Activated T-helper 1 cell treated with anti-CD3 and anti-CD28 coated beads, Interleukin-12 subunit alpha, Interleukin-12 subunit beta, Interleukin-2, Interleukin-4 antibody, amounts not matched to agents 30 ng/mL and 10 ng/mL and 1 ng/mL, durations not matched to agents 14 hours and 24 hours and 36 hours (primary cell): ENCODE measurements at regions of chr17 and their contacts with region 1.

Region 1: DNA sequence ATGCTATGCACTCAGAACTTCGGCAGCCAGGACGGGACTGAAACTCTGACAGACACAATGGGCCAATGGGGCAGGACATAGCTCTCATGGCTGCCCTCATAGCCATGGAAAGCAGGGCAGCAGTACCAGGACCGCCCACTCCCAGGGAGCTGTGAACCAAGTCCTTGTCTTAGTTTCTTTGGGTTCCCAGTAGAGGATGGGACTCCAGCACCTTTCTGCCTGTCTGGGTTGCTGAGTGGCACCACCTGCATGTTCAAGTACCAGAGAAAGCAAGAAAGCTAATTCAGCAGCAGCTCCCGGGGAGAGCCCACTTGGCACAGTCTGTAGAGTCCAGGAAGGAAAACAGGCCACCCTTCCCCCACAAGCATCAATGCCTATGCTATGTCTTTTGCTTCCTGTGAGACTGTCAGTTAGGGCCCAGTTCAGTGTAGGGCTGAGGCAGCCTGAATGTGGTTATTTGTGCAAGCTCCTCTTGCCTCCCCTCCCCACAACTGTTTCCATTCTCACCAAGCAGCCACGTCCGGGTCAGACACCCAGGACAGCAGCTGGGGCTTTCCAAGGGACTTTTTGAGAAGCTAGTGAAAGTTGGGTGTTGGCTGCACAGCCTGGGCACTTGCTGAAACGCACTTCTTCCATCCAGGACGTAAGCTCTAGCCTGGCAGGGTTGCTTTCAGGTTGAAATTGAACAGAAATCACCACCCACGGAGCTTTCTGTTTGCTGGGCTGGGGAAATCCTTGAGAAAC is 7.8 kb downstream of the SUPT4H1 start:
- DNase-seq: peak; percentile 91
- H3K4me3 Mint-ChIP-seq: peak overlapping the region; percentile 100
- H3K27ac Mint-ChIP-seq: peak overlapping the region; percentile 98
- H3K4me1 Mint-ChIP-seq: peaks cover 80% of the 10 kb centered on the region
- H3K27me3 Mint-ChIP-seq: peaks cover 2% of the 10 kb centered on the region

Region 2: DNA sequence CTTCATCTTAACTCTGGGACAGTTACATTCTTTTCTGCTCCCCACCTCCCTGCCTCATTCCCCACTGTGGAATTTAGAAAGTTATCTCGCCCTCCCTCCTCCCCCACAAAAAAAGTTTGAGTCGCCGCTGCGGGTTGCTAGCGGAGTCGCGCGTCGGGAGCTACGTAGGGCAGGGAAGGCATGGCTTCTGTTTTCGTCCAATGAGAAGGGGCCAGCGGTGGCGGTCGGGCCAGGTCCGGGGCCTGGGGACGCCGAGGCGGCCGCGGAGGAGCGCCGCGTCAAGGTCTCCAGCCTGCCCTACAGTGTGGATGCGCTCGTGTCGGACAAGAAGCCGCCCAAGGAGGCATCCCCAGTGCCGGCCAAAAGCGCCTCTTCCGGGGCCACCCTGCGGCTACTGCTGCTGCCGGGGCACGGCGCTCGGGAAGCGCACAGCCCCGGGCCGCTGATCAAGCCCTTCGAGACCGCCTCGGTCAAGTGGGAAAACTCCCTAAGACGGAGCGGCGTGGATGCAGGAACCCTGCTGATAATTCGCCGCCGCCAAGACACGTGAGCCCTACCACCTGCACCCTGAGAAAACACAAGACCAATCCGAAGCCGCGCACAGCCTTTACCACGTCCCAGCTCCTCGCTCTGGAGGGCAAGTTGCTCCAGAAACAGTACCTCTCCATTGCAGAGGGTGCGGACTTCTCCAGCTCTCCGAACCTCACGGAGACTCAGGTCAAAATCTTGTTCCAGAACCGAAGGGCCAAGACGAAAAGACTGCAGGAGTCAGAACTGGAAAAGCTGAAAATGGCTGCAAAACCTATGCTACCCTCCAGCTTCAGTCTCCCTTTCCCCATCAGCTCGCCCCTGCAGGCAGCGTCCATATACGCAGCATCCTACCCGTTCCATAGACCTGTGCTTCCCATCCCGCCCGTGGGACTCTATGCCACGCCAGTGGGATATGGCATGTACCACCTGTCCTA is 187.1 kb before region 1 on chr17:
- intact Hi-C with region 1: loop called (anchors 1 kb)
- DNase-seq: peak; percentile 43
- H3K4me3 Mint-ChIP-seq: peak overlapping the region; percentile 83
- H3K27ac Mint-ChIP-seq: peak overlapping the region; percentile 79
- H3K4me1 Mint-ChIP-seq: peaks cover 49% of the 10 kb centered on the region
- H3K27me3 Mint-ChIP-seq: peaks cover 15% of the 10 kb centered on the region

Region 3: DNA sequence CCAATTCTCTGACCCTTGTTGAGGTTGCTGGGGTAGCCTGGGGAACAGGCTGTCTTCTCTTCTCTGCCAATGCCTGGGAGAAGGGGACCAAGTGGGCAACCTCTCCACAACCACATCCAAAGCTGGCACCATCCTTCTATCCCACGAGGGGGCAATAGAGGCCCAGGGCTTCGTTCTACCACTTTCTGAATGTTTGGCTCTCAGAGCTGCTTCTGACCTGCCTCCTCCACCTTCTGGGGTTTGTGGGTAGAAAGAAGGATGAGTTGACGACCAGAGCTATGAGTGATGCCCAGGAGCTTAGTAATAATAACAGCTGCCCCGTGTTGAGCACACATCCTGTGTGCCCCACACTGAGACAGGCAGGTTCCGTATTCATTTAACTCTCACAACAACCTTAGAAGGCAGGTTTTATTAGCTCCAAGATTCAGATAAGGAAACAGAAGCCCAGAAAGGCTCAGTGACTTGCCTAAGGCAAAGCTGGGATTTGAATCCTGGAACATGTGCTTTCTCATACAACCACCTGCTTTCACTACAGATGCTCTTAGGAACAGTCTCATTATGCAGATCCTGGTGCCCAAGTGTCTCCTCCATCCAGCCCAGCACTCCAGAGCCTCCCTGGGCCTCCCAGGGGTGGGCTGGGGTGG is 26.7 kb before region 1 on chr17:
- intact Hi-C with region 1: loop called (anchors 1 kb)
- DNase-seq: peak; percentile 55
- H3K4me3 Mint-ChIP-seq: no peak overlapping the region
- H3K27ac Mint-ChIP-seq: peak overlapping the region; percentile 87
- H3K4me1 Mint-ChIP-seq: peaks cover 28% of the 10 kb centered on the region
- H3K27me3 Mint-ChIP-seq: no peaks in the 10 kb centered on the region

Region 4: GRCh38 chr17:58382108-58382871 is 38.1 kb after region 1 on chr17:
- intact Hi-C with region 1: loop called (anchors 2 kb)
- DNase-seq: no peak
- H3K4me3 Mint-ChIP-seq: peak overlapping the region; percentile 0
- H3K27ac Mint-ChIP-seq: peak overlapping the region; percentile 42
- H3K4me1 Mint-ChIP-seq: peaks cover 46% of the 10 kb centered on the region
- H3K27me3 Mint-ChIP-seq: no peaks in the 10 kb centered on the region

Region 5: DNA sequence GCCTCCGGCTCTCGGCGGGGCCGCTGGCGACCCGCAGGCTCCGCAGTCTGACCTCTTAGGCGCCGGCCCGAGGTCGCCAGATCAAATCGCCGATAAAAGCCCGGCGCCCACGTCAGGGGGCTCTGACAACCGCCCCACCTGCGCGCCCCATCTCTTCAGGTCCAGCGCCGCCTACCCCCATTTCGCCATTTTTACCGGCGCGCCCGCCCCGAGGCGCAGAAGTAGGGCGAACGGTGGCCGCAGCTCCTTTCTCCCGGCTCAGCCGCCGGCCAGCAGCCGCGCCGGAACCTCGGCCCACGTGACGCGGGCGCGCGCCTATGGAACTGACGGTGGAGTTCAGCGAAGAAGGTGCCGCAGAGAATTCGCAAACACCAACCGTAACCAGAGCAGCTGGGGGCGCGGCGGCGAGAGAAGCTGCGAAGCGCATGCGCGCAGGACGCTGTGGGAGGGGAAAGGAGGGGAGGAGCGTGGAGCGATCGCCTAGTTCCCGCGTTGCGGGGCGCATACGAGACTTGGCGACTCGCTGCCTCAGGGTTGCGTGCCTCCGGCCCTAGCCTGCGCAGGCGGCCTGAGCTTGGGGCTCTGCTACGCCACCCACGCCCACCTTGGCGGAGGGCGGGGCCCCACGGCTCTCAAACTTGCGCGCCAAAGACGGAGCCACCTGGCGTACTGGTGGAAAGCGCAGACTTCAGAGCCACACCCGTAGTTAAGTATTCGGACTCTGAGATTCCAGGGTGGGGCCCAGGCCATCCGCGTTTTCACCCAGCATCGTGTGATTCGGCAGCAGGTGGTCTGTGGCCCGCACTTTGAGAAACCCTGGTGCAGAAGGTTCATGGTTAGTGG is 762.5 kb after region 1 on chr17 and contains the start of gene TRIM37:
- intact Hi-C with region 1: loop called (anchors 5 kb)
- DNase-seq: peak; percentile 100
- H3K4me3 Mint-ChIP-seq: peak within 1 kb of the TSS; percentile 97
- H3K27ac Mint-ChIP-seq: peak within 1 kb of the TSS; percentile 90
- H3K4me1 Mint-ChIP-seq: peaks cover 66% of the 10 kb centered on the region
- H3K27me3 Mint-ChIP-seq: peaks cover 1% of the 10 kb centered on the region
- total RNA-seq, gene TRIM37: 27.5 and 27.7 TPM in 2 replicates